ENCODE measurements at regions of chr1 and their contacts with region 1.

Region 1: DNA sequence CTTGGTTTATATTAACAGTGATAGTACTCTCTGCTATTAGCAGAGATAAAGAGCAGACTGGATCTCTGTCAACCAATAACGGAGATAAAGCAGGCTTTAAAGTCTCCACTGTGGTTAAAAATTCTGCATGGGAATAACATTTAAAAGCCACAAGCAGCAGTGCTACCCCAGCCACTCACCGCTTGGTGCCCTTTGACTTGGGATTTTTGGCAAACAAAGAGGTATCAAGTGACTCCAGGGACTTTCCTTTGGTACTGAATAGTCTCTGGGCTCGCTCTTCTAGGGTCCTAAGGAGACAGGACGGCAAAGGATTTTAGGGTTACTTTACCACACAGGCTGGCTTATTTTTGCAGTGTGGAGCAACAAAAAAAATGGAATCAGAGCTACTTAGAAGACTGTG is 11.3 kb downstream of the SF3A3 start:
- DNase-seq: no peak
- ATAC-seq: peak in 2 of 4 donors; percentile 35 to 85
- H3K4me3 ChIP-seq: no peak overlapping the region
- H3K27ac ChIP-seq: no peak overlapping the region
- H3K4me1 ChIP-seq: no peaks in the 10 kb centered on the region
- H3K27me3 ChIP-seq: no peaks in the 10 kb centered on the region
- CTCF ChIP-seq: no peak
- POLR2A ChIP-seq: no peak

Region 2: GRCh38 chr1:37817481-37817880 is 161.1 kb before region 1 on chr1:
- intact Hi-C with region 1: no loop called
- DNase-seq: peak; percentile 69 to 80 (median 78)
- ATAC-seq: peak; percentile 63 to 97 (median 88)
- H3K4me3 ChIP-seq: no peak overlapping the region
- H3K27ac ChIP-seq: peak overlapping the region in 2 of 3 donors; percentile 71 to 78
- H3K4me1 ChIP-seq: peaks cover 0 to 8% (median 4%) of the 10 kb centered on the region in 4 donors
- H3K27me3 ChIP-seq: no peaks in the 10 kb centered on the region
- CTCF ChIP-seq: no peak
- POLR2A ChIP-seq: no peak

Region 3: GRCh38 chr1:37846647-37847339 is 131.7 kb before region 1 on chr1:
- intact Hi-C with region 1: no loop called
- DNase-seq: no peak
- ATAC-seq: peak in 1 of 4 donors; percentile 30
- H3K4me3 ChIP-seq: no peak overlapping the region
- H3K27ac ChIP-seq: no peak overlapping the region
- H3K4me1 ChIP-seq: peaks cover 0 to 30% (median 10%) of the 10 kb centered on the region in 4 donors
- H3K27me3 ChIP-seq: no peaks in the 10 kb centered on the region
- CTCF ChIP-seq: no peak
- POLR2A ChIP-seq: no peak

Region 4: DNA sequence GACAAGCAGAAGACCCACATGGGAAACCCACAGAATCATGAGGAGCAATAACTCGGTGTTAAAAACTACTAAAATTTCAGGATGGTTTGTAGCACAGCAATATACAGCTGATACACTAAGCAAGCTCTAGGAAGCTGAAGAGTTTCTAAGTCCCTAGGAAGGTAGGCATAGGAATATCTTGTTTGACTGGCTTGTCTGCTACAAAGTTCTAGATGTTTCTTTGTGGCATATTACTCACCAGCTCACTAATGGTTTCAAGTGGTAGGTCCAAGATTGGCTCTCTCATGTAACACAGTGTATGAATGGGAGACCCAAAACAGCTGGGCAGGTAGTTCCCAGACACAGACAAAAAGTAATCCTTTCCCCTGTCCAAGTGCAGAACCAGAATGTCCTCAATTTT is 105.8 kb before region 1 on chr1:
- intact Hi-C with region 1: loop called in 1 of 2 experiments (anchors 5 kb)
- DNase-seq: no peak
- ATAC-seq: no peak
- H3K4me3 ChIP-seq: no peak overlapping the region
- H3K27ac ChIP-seq: no peak overlapping the region
- H3K4me1 ChIP-seq: no peaks in the 10 kb centered on the region
- H3K27me3 ChIP-seq: no peaks in the 10 kb centered on the region
- CTCF ChIP-seq: no peak
- POLR2A ChIP-seq: no peak

Measured in right lobe of liver (tissue), 6 donors.